Panc1 (cell line): ENCODE measurements at regions of chr16 and their contacts with region 1.

Region 1: DNA sequence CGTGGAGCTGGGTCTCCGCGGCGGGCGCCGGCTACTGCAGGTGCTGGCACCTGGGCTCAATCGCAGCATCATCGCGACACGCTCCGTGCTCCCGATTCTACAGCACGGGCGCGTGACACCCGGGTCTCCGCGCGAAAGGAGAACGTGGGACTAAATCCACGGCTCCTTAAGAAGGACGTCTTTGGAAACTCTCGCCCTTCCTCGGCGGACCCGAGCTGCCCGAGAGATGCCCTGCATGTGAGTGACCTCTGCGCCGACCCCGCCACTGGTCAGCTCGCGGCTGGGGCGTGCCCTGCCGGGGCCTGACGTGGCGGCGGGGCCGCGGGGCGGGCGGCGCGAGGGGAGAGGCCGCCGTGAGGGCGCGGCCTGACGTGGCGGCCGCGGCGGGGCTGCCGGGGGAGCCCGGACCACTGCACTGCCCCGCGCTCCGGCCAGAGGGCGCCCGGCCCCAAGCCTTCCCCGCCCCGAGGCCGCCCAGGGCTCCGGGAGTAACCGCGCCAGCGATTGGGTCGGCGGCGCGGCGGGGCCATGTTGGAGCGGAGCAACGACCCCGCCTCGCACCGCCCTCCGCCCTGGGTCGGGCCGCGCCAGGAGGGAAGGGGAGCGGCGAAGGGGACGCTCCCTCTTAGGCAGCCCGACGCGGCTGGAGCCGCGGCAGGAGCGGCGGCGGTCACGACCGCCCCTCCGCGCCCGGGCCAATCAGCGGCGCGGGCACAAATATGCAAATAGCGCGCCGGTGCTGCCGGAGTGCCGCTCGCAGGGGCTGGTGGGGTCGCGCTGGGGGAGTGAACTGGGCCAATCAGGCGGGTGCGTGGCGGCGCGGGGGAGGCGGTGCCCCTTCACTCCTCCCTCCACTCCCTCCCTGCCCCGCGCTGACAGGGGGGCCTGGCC is 75.6 kb downstream of the CHD9 start:
- DNase-seq: peak; percentile 33
- ATAC-seq: peak; percentile 94
- H3K4me3 ChIP-seq: peak overlapping the region; percentile 59 to 66
- H3K27ac ChIP-seq: peak overlapping the region; percentile 81
- H3K4me1 ChIP-seq: peaks cover 9% of the 10 kb centered on the region
- H3K27me3 ChIP-seq: no peaks in the 10 kb centered on the region
- CTCF ChIP-seq: peak; percentile 84

Region 2: GRCh38 chr16:53054670-53055485 is 75.5 kb before region 1 on chr16 and contains the start of gene CHD9:
- CTCF ChIA-PET with region 1: interaction called, 3 read pairs
- POLR2A ChIA-PET with region 1: no interaction called
- in situ Hi-C with region 1: no loop called
- intact Hi-C with region 1: loop called (anchors 10 kb)
- DNase-seq: no peak
- ATAC-seq: peak; percentile 94
- H3K4me3 ChIP-seq: peak within 1 kb of the TSS; percentile 62 to 77
- H3K27ac ChIP-seq: peak within 1 kb of the TSS; percentile 90
- H3K4me1 ChIP-seq: peaks cover 7% of the 10 kb centered on the region; the same call in 1 of the 2 replicates
- H3K27me3 ChIP-seq: no peaks in the 10 kb centered on the region
- CTCF ChIP-seq: peak; percentile 96
- total RNA-seq, gene CHD9: 25.4 TPM

Region 3: GRCh38 chr16:53080345-53081031 is 49.9 kb before region 1 on chr16:
- CTCF ChIA-PET with region 1: no interaction called
- POLR2A ChIA-PET with region 1: no interaction called
- in situ Hi-C with region 1: no loop called
- intact Hi-C with region 1: no loop called
- DNase-seq: no peak
- ATAC-seq: no peak
- H3K4me3 ChIP-seq: no peak overlapping the region
- H3K27ac ChIP-seq: no peak overlapping the region
- H3K4me1 ChIP-seq: no peaks in the 10 kb centered on the region
- H3K27me3 ChIP-seq: no peaks in the 10 kb centered on the region
- CTCF ChIP-seq: no peak

Region 4: DNA sequence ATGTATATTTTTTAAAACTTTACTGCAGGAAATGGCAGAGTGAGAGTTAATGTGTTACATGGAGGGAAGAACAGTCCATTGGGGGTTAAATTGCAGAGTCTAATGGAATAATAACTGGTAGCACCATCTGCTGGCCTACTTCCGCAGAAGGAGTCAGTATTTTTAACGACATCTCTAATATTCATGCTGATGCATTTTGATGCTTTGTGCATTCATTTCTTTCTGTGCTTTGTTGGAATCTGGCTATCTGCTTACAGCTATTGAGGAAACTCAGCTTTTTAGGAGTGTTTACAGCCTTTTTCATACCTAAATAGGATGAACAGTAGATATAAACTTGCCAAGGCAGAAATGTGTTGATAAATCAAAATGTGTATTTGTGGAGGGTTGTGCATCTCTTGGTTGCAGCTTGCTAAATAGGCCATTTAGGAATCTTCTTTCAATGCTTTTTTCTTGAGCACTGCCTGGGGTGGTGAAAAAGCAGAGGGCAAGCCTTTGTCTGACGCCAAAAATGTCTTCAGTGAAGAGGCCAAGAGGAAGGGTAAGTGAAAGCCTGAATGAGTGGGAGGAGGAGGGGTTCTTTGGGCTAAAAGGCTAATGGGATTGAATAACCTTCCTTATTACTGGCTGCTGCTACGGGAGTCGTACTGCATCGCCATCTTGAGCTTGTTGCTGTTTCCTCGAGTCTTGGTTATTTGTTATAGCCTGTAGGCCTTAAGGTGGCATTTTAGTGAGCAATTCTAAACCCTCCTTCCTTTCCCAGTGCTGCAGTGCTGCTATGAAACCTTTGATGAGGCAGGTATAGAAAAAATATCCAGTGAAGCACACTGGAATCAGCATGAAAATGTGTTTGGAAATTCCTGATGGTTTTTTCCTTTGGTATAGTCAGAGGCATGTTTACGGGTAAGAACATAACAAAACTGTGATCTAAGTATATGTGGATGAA is 77.7 kb after region 1 on chr16:
- CTCF ChIA-PET with region 1: no interaction called
- POLR2A ChIA-PET with region 1: interaction called, 3 read pairs
- in situ Hi-C with region 1: no loop called
- intact Hi-C with region 1: loop called (anchors 5 kb)
- DNase-seq: peak; percentile 50
- ATAC-seq: peak; percentile 99
- H3K4me3 ChIP-seq: peak overlapping the region; percentile 54 to 78
- H3K27ac ChIP-seq: peak overlapping the region; percentile 94
- H3K4me1 ChIP-seq: no peaks in the 10 kb centered on the region; the same call in 1 of the 2 replicates
- H3K27me3 ChIP-seq: no peaks in the 10 kb centered on the region
- CTCF ChIP-seq: peak; percentile 59; the same call in 1 of the 2 replicates

Region 5: DNA sequence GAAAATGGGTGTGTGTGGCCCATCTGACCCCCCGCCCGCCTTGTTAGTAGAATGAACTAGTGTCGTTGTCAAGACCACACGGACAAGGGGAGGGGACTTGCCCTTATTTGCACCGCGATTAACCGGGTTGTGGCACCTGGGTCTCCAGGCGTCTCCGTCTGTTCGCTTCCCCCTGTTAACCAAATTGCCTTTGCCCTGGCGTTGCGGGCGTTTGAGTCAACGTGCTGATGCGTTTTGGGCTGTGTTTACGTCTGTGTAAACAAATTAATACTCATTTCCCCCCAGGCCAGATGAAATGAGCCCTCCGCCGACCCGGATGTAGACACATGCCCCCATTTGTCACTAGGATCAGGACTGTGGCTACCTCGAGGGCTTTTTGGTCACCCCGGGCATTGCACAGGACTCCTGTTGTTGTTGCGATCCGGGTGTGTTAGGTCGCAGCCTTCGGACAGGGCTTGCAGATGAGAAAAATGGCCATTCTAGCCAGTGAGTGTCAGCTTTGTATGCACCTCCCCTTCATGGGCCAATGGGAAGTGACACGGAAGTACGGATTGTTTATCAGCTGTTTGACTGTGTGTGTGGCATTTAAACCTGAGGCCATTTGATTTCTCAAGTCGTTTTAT is 304.8 kb after region 1 on chr16:
- CTCF ChIA-PET with region 1: interaction called, 12 read pairs
- POLR2A ChIA-PET with region 1: no interaction called
- in situ Hi-C with region 1: no loop called
- intact Hi-C with region 1: no loop called
- DNase-seq: peak; percentile 71
- ATAC-seq: peak; percentile 94
- H3K4me3 ChIP-seq: peak overlapping the region; percentile 92 to 93
- H3K27ac ChIP-seq: peak overlapping the region; percentile 76
- H3K4me1 ChIP-seq: peaks cover 5% of the 10 kb centered on the region; the same call in 1 of the 2 replicates
- H3K27me3 ChIP-seq: no peaks in the 10 kb centered on the region
- CTCF ChIP-seq: no peak

Region 6: DNA sequence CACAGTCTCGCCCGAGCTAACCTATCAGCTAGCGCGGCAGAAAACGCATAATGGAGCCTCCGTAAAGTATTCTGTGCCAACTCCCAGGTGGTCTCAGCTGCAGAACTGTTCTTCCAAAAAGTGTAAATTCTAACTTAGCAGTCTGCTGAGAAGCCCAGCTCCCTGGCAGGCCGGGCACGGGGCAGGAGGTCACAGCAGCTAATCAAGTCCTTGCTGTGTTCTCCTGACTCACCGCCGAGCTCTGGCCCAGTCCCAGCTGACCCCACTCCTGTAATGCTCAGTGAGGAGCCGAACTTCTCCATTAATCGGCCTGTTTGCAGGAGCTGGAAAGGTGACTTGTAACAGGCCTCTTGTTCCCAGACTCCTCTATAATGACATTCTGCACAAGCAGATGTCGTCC is 962.9 kb after region 1 on chr16:
- CTCF ChIA-PET with region 1: no interaction called
- POLR2A ChIA-PET with region 1: no interaction called
- in situ Hi-C with region 1: no loop called
- intact Hi-C with region 1: no loop called
- DNase-seq: no peak
- ATAC-seq: no peak
- H3K4me3 ChIP-seq: no peak overlapping the region
- H3K27ac ChIP-seq: no peak overlapping the region
- H3K4me1 ChIP-seq: no peaks in the 10 kb centered on the region
- H3K27me3 ChIP-seq: no peaks in the 10 kb centered on the region
- CTCF ChIP-seq: no peak